Activated CD4-positive, alpha-beta T cell treated with anti-CD3 and anti-CD28 coated beads for 36 hours (primary cell): ENCODE measurements at regions of chr6 and their contacts with region 1.

Region 1: DNA sequence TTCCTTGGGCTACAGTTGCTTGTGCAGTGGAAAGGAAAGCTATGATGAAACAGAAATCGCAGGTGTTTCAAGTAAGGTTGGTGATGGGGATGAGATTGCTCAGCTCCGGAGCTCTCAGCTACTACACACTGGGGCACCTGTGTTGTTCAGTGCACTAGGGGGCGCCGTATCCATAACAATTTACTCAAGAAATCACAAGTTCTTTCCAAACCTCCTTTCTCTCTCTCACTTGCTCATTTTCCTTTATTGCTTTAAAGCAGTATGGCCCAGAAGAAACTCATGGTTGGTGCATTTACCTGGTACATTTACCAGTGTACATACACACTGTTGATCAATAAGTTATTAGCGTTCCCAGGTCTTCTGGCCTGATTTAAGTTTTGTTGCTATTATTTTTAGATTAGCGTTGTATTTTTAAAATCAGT is 235.2 kb upstream of the TAB2 start:
- DNase-seq: peak; percentile 94
- ATAC-seq: peak; percentile 79
- H3K4me3 Mint-ChIP-seq: no peak overlapping the region
- H3K27ac Mint-ChIP-seq: peak overlapping the region; percentile 52
- H3K4me1 Mint-ChIP-seq: peaks cover 51% of the 10 kb centered on the region
- H3K27me3 Mint-ChIP-seq: no peaks in the 10 kb centered on the region

Region 2: DNA sequence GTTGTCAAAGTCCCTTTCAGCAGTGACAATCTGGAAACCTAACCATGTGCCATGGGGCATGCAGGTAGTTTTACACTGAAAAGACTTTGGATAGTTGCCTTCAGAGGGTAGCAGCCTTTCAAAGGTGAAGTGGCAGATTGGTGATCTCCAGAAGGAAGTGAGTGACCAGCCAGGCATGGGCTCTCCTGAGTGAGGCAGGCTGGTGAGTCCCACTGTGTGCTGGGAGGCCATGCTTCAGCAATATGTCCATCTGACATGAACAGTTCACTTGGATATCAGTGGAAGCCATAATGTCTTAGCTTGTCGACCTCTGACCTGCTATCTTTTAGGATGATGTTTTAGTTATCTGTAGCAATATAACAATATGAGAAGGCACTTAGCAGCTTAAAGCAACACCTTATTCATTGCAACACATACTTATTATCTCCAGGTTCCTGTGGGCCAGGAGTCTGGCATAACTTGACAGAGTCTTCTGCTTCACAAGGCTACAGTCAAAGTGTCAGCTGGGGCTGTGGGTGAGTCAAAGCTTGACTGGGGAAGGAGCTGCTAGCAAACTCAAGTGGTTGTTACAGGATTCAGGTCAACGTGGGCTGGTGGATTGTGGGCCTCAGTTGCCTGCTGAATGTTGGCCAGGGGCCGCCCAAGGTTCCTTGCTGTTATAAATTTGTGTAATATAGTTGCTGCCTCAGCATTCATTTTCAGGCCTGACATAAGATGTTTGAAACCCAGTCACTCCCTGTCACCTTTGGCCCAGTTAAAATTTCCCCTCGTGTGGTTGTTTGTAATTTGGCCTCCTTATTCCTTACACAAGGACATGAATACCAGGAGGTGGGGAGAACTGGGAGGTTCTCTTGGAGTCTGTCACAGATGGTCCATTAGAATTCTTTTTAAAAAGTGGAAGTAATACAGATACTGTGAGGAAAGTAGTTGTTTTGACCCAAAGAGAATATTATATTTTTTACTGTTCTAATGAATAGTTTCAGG is 235.2 kb before region 1 on chr6:
- CTCF ChIA-PET with region 1: no interaction called
- POLR2A ChIA-PET with region 1: no interaction called
- intact Hi-C with region 1: no loop called
- DNase-seq: peak; percentile 46
- ATAC-seq: peak; percentile 76
- H3K4me3 Mint-ChIP-seq: no peak overlapping the region
- H3K27ac Mint-ChIP-seq: no peak overlapping the region
- H3K4me1 Mint-ChIP-seq: peaks cover 14% of the 10 kb centered on the region
- H3K27me3 Mint-ChIP-seq: no peaks in the 10 kb centered on the region

Region 3: DNA sequence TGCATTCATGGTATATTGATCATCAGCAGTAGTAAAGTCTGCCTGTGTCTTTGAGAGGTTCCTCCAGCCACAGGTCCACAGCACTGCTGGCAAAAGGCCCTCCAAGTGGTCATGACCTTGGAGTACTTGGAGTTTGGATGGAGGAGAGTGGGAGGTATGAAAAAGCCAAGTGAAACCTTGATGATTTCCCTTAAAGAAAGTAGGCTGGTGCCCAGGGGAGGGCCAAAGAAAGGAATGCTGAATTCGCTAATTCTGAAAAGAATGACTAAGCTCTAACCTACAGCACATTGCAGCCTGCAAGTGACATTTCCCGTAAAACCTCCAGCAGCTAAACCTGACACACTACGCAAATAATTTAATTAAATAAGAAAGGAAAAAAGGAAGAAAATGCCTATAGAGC is 11.9 kb after region 1 on chr6:
- CTCF ChIA-PET with region 1: interaction called, 9 read pairs
- POLR2A ChIA-PET with region 1: interaction called, 5 read pairs
- intact Hi-C with region 1: loop called in 1 of 2 experiments (anchors 1 kb)
- DNase-seq: peak; percentile 35
- ATAC-seq: peak; percentile 49
- H3K4me3 Mint-ChIP-seq: peak overlapping the region; percentile 23
- H3K27ac Mint-ChIP-seq: peak overlapping the region; percentile 84
- H3K4me1 Mint-ChIP-seq: peaks cover 38% of the 10 kb centered on the region
- H3K27me3 Mint-ChIP-seq: no peaks in the 10 kb centered on the region

Region 4: DNA sequence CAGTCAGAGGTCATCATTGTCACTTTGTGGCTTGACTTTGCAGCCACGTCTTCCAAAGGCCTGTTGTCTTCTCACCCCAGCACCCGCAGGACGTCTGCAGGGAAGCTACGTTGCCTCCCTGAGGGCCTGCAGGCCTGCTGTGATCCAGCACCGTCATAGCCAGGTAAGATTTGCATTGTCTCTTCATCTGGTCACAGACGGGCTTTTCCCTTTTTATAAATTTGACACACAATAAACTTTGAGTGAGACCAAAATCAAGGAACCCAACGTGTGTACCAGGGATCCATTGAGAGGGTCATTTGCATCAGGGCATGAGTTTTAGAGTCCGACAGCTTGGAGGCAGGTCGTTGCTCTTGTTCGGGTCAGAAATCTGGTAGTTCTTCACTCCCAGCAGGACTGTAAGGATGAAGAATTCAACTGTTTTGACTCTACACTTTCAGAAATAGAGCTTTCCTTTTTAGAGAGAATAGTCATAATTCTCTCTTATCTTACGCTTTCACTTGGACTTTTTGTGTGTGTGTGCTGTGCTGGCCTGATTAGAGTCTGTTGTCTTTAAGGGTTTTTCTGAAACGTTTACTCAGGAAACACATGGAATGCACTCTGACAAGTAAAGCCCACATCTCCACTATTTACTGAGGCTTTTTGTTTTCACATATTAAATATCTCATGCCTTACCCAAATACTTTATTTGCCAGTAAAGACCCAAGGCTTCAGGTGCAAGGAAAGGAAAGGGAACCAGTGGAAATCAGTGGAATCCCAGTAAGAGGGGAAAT is 58.0 kb after region 1 on chr6:
- CTCF ChIA-PET with region 1: interaction called, 4 read pairs
- POLR2A ChIA-PET with region 1: no interaction called
- intact Hi-C with region 1: loop called in 1 of 2 experiments (anchors 2 kb)
- DNase-seq: peak; percentile 85
- ATAC-seq: peak; percentile 84
- H3K4me3 Mint-ChIP-seq: peak overlapping the region; percentile 63
- H3K27ac Mint-ChIP-seq: peak overlapping the region; percentile 97
- H3K4me1 Mint-ChIP-seq: peaks cover 42% of the 10 kb centered on the region
- H3K27me3 Mint-ChIP-seq: no peaks in the 10 kb centered on the region

Region 5: GRCh38 chr6:149235130-149235561 is 152.8 kb after region 1 on chr6:
- CTCF ChIA-PET with region 1: interaction called, 3 read pairs
- POLR2A ChIA-PET with region 1: no interaction called
- intact Hi-C with region 1: loop called (anchors 2 to 5 kb)
- DNase-seq: peak; percentile 20
- ATAC-seq: no peak
- H3K4me3 Mint-ChIP-seq: no peak overlapping the region
- H3K27ac Mint-ChIP-seq: peak overlapping the region; percentile 98
- H3K4me1 Mint-ChIP-seq: peaks cover 44% of the 10 kb centered on the region
- H3K27me3 Mint-ChIP-seq: no peaks in the 10 kb centered on the region

Region 6: DNA sequence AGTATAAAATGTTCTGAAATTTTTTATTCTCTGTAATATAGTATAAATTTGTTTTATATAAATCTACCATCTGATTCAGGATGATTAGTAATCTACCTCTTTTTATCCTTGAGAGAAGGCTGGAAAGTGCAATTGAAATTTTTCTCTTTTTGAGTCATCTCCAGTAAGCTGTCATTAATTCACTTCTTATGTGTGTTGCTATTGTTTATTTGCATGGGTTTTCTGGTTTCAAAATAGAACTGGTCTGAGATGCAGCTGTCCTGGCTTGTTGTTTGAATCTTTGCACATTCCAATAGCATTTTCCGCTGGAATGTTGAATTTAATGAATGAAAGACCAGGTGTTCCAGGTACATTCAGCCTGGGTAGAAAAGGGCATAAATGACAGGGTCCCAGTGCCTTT is 210.9 kb after region 1 on chr6:
- CTCF ChIA-PET with region 1: no interaction called
- POLR2A ChIA-PET with region 1: no interaction called
- intact Hi-C with region 1: no loop called
- DNase-seq: no peak
- ATAC-seq: peak; percentile 49
- H3K4me3 Mint-ChIP-seq: no peak overlapping the region
- H3K27ac Mint-ChIP-seq: no peak overlapping the region
- H3K4me1 Mint-ChIP-seq: peaks cover 9% of the 10 kb centered on the region
- H3K27me3 Mint-ChIP-seq: no peaks in the 10 kb centered on the region

Region 7: DNA sequence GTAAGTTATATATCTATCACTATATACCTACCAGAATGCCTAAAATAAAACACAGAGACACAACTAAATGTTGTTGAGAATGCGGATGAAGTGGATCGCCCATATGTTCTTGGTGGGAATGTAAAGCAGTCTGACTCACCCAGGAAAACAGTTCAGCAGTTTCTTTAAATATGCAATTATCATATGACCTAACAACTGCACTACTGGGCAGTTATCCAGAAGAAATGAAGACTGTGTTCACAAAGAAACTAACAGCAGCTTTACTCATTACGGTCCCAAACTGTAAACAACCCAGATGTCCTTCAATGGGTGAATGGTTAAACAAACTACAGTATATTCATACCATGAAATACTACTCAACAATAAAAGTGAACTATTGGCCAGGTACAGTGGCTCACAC is 416.8 kb after region 1 on chr6:
- CTCF ChIA-PET with region 1: interaction called, 3 read pairs
- POLR2A ChIA-PET with region 1: no interaction called
- intact Hi-C with region 1: loop called in 1 of 2 experiments (anchors 5 kb)
- DNase-seq: no peak
- ATAC-seq: no peak
- H3K4me3 Mint-ChIP-seq: no peak overlapping the region
- H3K27ac Mint-ChIP-seq: peak overlapping the region; percentile 76
- H3K4me1 Mint-ChIP-seq: peaks cover 85% of the 10 kb centered on the region
- H3K27me3 Mint-ChIP-seq: no peaks in the 10 kb centered on the region